ENCODE measurements at regions of chr13 and their contacts with region 1.

Region 1: DNA sequence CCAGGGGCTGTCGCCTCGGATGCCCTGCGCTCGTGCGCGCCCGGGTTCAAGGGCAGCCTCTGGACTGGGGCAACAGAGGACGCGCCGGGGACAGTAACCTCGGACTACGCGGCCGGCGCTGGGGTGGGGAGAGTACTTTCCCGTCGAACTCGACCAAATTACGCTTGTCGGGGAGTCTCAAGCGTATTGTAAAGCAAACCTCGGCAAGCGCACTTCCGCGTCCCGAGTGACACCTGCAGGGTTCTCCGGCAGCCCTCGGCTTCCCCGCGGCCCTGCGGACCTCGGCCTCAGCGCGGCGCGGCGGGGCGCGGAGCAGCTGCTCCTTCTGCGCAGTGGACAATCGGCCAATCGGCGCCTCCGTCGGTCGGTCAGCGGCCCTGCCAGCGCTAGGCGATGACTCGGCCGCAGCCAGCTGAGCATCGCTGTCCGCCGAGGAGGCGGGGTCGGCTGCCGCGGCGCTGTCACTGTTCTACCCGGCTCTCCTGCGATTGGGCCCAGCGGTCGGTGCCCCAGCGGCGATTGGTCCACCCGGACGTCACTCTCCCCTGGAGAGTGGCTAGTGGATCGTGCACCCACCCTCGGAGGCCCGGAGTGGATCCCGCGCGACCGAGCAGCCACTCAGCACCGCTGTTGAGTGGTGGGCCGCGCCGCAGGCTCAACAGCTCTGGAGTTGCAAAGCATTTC is at the start of gene SLC46A3:
- DNase-seq: peak; percentile 99
- H3K4me3 ChIP-seq: peak within 1 kb of the TSS; percentile 67 to 75 (median 74)
- H3K27ac ChIP-seq: peak within 1 kb of the TSS; percentile 90 to 98 (median 93)
- H3K4me1 ChIP-seq: peaks cover 0 to 21% (median 16%) of the 10 kb centered on the region in 4 donors
- H3K27me3 ChIP-seq: no peaks in the 10 kb centered on the region
- CTCF ChIP-seq: no peak
- EP300 ChIP-seq: no peak
- POLR2A ChIP-seq: peak; percentile 21 to 47
- total RNA-seq, gene SLC46A3: 14.1 to 18.2 (median 15.1) TPM

Region 2: GRCh38 chr13:28401303-28402056 is 317.2 kb before region 1 on chr13:
- intact Hi-C with region 1: no loop called
- DNase-seq: no peak
- H3K4me3 ChIP-seq: no peak overlapping the region
- H3K27ac ChIP-seq: no peak overlapping the region
- H3K4me1 ChIP-seq: peaks cover 0 to 8% (median 4%) of the 10 kb centered on the region in 4 donors
- H3K27me3 ChIP-seq: no peaks in the 10 kb centered on the region
- CTCF ChIP-seq: no peak
- EP300 ChIP-seq: no peak
- POLR2A ChIP-seq: no peak

Region 3: DNA sequence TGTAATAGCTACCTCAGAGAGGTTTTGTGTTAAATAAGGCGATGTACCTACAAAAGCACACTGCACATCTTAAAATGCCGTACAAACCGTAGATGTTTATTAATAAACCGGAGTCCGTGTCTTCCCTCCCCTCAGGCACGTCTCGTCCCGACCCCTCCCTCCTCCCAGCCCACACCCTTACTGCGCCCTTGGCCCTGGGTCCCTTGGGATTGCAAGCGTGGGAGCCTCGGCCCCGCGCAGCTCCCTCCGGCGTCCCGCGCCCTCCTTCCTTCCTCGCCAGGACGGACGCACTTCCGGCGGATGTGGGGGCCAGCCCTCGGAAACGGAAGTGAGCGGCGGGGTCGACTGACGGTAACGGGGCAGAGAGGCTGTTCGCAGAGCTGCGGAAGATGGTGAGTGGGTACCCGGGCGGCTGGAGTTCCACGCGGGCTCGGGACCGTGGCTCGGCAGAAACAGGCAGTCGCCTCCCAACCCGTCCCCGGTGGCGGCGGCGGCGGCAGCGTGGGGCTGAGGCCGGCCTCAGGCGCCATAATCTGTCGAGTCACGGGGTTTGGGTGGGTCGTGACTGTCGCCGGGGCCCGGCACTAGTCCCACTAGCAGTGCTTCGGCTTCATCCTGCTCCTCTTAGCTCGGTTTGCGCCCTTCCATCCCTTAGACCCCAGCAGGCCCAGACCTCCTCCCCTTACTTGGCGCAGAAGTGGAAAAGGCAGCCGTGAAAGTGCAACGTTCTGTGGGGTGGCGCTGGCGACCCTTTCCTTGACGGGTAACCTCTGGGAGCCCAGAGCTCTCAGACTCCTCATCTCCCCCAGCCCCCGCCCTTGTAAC is 59.7 kb before region 1 on chr13 and contains the start of gene POMP:
- intact Hi-C with region 1: loop called (anchors 2 kb)
- DNase-seq: peak; percentile 96
- H3K4me3 ChIP-seq: peak within 1 kb of the TSS; percentile 61 to 92 (median 75)
- H3K27ac ChIP-seq: peak within 1 kb of the TSS; percentile 86 to 96 (median 90)
- H3K4me1 ChIP-seq: peaks cover 0 to 52% (median 46%) of the 10 kb centered on the region in 4 donors
- H3K27me3 ChIP-seq: no peaks in the 10 kb centered on the region
- CTCF ChIP-seq: no peak
- EP300 ChIP-seq: peak in 2 of 4 donors; percentile 73 to 75
- POLR2A ChIP-seq: peak; percentile 95 to 98
- total RNA-seq, gene POMP: 38.6 to 96.4 (median 66.7) TPM

Region 4: DNA sequence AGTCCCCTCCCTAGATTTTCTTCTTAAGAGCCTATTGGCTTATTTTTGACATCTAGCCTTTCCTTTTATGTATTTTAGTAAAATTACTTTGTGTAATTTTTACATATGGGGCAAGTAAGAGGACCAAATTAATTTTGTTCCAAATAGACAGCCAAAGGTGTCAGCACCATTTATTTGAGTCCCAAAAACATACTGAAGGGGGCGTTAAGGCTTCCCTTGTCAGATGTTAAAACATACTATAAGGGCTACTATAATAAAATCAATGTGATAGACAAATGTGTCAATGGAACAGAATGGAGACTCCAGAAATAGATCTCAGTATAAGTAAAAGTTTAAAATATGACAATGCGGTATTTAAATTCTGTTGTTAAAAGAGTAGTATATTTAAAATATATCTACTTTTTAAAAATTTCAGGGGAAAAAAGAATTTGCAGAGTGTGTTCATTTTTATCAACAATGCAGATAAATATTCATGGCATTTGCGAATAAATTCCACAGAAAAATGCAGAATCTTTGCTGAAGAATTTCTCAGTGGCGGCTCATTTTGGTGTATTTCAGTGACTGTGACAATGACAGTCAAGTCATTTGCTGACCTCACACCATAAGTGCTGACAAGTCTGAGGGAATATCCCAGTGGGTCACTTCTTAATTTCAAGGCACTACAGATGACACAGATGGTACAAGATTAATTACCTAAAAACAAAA is 235.2 kb after region 1 on chr13:
- intact Hi-C with region 1: no loop called
- DNase-seq: no peak
- H3K4me3 ChIP-seq: no peak overlapping the region
- H3K27ac ChIP-seq: no peak overlapping the region
- H3K4me1 ChIP-seq: no peaks in the 10 kb centered on the region
- H3K27me3 ChIP-seq: no peaks in the 10 kb centered on the region
- CTCF ChIP-seq: no peak
- EP300 ChIP-seq: no peak
- POLR2A ChIP-seq: no peak